Stomach (tissue), 19 donors: ENCODE measurements at regions of chr1 and their contacts with region 1.

Region 1: GRCh38 chr1:165768513-165769394 is at the start of gene TMCO1:
- DNase-seq: peak; percentile 95 to 99
- H3K4me3 ChIP-seq: peak within 1 kb of the TSS; percentile 70 to 97 (median 77)
- H3K27ac ChIP-seq: peak within 1 kb of the TSS; percentile 88 to 93 (median 91)
- H3K4me1 ChIP-seq: peaks cover 23 to 62% (median 43%) of the 10 kb centered on the region in 4 donors
- H3K27me3 ChIP-seq: no peaks in the 10 kb centered on the region
- CTCF ChIP-seq: peak in 1 of 7 experiments; percentile 19
- EP300 ChIP-seq: peak; percentile 23
- POLR2A ChIP-seq: peak in 1 of 4 donors; percentile 37
- total RNA-seq, gene TMCO1: 6.7 to 69.2 (median 35.0) TPM

Region 2: DNA sequence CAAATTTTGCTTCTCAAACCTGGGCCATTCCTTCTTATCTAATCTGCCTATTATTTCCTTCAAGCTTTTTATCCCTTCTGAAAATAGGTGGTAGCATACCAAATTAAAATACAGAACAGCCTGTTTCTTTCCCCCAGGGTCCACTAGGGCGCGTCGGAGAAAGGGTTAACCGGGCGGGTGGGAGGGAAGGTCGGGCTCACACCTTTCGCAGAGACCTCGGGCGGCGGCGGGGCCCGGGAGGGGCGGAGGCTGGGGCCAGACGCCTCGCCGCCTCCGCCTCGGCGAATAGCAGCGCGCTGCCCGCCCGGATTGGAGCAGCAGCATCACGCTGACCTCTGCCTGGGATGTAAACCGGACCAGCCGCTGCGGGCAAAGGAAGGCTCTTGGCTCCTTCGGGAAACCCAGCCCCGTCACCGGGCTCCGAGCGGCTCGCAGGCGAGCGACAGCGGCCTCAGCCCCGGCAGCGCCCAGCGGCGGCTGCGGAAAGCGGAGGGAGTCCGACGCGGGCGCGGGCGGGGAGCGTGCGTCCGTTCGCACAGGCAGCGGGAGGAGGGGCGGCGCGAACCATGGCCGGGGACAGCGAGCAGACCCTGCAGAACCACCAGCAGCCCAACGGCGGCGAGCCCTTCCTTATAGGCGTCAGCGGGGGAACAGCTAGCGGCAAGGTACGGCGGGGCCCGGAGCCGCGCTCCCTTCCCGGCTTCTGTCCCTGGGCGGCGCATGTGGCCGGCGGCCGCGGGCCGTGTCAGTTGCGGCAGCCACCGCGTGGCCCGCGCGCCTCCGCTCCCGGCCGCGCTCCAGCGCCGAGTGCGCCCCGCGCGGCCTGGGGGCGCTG is 58.7 kb after region 1 on chr1 and contains the start of gene UCK2:
- intact Hi-C with region 1: loop called (anchors 10 kb)
- DNase-seq: peak; percentile 82 to 93
- H3K4me3 ChIP-seq: peak within 1 kb of the TSS; percentile 72 to 94 (median 86)
- H3K27ac ChIP-seq: peak within 1 kb of the TSS; percentile 91 to 99 (median 95)
- H3K4me1 ChIP-seq: peaks cover 16 to 31% (median 24%) of the 10 kb centered on the region in 4 donors
- H3K27me3 ChIP-seq: no peaks in the 10 kb centered on the region
- CTCF ChIP-seq: peak in 1 of 7 experiments; percentile 25
- EP300 ChIP-seq: no peak
- POLR2A ChIP-seq: no peak
- total RNA-seq, gene UCK2: 12.3 to 72.8 (median 40.4) TPM